CD8-positive, alpha-beta memory T cell (primary cell): ENCODE measurements at regions of chr1 and their contacts with region 1.

Region 1: GRCh38 chr1:23496490-23497181 is 12.7 kb upstream of the ASAP3 start:
- DNase-seq: no peak
- H3K4me3 ChIP-seq: no peak overlapping the region
- H3K4me3 Mint-ChIP-seq: no peak overlapping the region
- H3K27ac ChIP-seq: no peak overlapping the region
- H3K27ac Mint-ChIP-seq: no peak overlapping the region
- H3K4me1 ChIP-seq: no peaks in the 10 kb centered on the region
- H3K4me1 Mint-ChIP-seq: peaks cover 3 to 5% (median 5%) of the 10 kb centered on the region in 3 donors
- H3K27me3 ChIP-seq: no peaks in the 10 kb centered on the region
- H3K27me3 Mint-ChIP-seq: peaks cover 0 to 6% of the 10 kb centered on the region in 2 donors

Region 2: DNA sequence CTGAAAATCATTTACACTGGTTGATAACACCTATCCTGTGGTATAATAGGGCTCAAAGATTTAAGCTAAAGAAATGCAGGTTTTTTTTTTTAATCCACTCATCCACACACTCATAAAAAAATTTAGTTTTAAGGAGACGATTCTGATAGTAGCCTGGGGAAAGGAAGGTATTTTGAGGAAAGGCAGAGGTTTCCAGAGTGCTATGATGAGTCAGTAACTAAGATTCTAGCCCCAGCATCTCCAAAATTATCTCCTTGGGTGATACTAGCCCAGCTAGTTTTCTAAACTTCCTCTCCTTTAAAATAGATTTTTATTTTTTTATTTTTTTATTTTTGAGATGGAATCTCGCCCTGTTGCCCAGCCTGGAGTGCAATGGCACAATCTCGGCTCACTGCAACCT is 33.4 kb before region 1 on chr1:
- CTCF ChIA-PET with region 1: no interaction called
- POLR2A ChIA-PET with region 1: no interaction called
- DNase-seq: no peak
- H3K4me3 ChIP-seq: no peak overlapping the region
- H3K4me3 Mint-ChIP-seq: no peak overlapping the region
- H3K27ac ChIP-seq: no peak overlapping the region
- H3K27ac Mint-ChIP-seq: no peak overlapping the region
- H3K4me1 ChIP-seq: no peaks in the 10 kb centered on the region
- H3K4me1 Mint-ChIP-seq: no peaks in the 10 kb centered on the region
- H3K27me3 ChIP-seq: no peaks in the 10 kb centered on the region
- H3K27me3 Mint-ChIP-seq: peaks cover 5 to 19% of the 10 kb centered on the region in 2 donors

Region 3: GRCh38 chr1:23484253-23485001 is 12.2 kb before region 1 on chr1:
- CTCF ChIA-PET with region 1: interaction called, 40 read pairs
- POLR2A ChIA-PET with region 1: interaction called, 3 read pairs
- DNase-seq: peak; percentile 86 to 94 (median 87)
- H3K4me3 ChIP-seq: peak overlapping the region; percentile 50
- H3K4me3 Mint-ChIP-seq: peak overlapping the region; percentile 87 to 95 (median 88)
- H3K27ac ChIP-seq: no peak overlapping the region
- H3K27ac Mint-ChIP-seq: peak overlapping the region in 6 of 8 donors; percentile 39 to 83 (median 67)
- H3K4me1 ChIP-seq: peaks cover 16% of the 10 kb centered on the region
- H3K4me1 Mint-ChIP-seq: peaks cover 14 to 20% (median 16%) of the 10 kb centered on the region in 3 donors
- H3K27me3 ChIP-seq: peaks cover 10% of the 10 kb centered on the region
- H3K27me3 Mint-ChIP-seq: peaks cover 17 to 27% of the 10 kb centered on the region in 2 donors

Region 4: DNA sequence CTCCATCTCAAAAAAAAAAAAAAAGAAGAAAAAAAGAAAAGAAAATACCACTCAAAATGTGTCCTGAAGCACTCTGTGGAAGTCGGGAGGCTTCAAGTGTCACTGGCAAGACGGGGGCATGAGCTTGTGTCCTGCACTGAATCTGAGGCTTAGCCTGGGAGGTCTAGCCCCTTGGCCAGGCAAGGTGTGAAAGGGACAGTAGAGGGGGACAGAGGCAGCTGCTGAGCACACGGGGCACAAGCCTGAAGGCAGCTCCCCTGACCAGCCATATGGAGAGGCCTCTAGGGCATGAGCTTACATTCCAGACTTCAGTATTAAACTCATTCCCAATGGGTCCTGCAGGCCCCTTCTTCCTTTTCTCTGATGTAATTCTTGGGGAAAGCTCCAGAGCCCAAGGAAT is 10.9 kb after region 1 on chr1:
- CTCF ChIA-PET with region 1: interaction called, 40 read pairs
- POLR2A ChIA-PET with region 1: no interaction called
- DNase-seq: no peak
- H3K4me3 ChIP-seq: no peak overlapping the region
- H3K4me3 Mint-ChIP-seq: no peak overlapping the region
- H3K27ac ChIP-seq: no peak overlapping the region
- H3K27ac Mint-ChIP-seq: peak overlapping the region in 2 of 8 donors; percentile 22 to 38
- H3K4me1 ChIP-seq: no peaks in the 10 kb centered on the region
- H3K4me1 Mint-ChIP-seq: no peaks in the 10 kb centered on the region
- H3K27me3 ChIP-seq: no peaks in the 10 kb centered on the region
- H3K27me3 Mint-ChIP-seq: no peaks in the 10 kb centered on the region

Region 5: DNA sequence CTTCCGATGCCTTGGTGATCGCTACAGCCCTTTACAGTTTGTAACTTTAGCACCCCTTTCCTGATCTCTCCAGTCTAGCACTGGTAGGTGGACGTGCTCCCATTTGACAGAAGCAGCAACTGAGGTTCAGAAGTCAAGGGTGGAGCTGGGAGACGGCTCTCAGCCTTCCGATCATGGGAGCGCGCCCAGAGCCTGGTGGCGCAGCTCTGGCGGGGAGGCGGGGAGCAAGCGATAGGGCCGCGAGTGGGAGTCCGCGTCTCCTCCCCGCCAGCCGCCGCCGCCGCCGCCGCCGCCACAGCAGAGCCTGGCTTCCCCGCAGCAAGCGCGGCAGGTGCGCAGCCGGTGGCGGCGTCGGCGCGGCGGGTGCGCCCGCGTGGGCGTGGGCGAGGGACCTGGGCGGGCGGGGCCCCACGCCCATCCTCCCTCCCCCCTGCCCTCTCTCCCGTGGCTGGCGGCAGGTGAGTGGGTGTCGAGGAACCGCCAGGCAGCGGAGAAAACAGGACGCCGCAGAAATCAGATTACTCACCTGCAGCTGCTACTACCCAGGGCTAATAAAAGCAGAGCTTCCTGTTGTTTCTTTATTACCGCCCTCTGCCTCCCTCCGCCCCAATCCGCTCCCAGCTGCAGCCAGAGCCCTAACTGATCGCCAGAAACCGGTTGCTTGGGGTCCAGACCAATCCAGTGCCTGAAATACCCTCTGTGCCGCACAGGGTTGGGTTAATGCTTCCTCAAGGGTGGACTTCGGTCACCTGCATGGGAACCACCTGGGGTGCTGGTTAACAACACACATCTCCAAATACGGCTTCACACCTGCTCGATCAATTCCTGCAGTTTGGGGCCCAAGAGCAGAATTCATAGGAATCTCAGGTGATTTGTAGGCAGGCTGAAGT is 122.9 kb after region 1 on chr1:
- CTCF ChIA-PET with region 1: interaction called, 13 read pairs
- POLR2A ChIA-PET with region 1: interaction called, 5 read pairs
- DNase-seq: peak; percentile 68 to 92 (median 82)
- H3K4me3 ChIP-seq: peak overlapping the region; percentile 61
- H3K4me3 Mint-ChIP-seq: peak overlapping the region; percentile 79 to 88 (median 83)
- H3K27ac ChIP-seq: peak overlapping the region; percentile 34
- H3K27ac Mint-ChIP-seq: peak overlapping the region; percentile 81 to 97 (median 94)
- H3K4me1 ChIP-seq: peaks cover 83% of the 10 kb centered on the region
- H3K4me1 Mint-ChIP-seq: peaks cover 71 to 88% (median 87%) of the 10 kb centered on the region in 3 donors
- H3K27me3 ChIP-seq: no peaks in the 10 kb centered on the region
- H3K27me3 Mint-ChIP-seq: peaks cover 0 to 2% of the 10 kb centered on the region in 2 donors

Region 6: DNA sequence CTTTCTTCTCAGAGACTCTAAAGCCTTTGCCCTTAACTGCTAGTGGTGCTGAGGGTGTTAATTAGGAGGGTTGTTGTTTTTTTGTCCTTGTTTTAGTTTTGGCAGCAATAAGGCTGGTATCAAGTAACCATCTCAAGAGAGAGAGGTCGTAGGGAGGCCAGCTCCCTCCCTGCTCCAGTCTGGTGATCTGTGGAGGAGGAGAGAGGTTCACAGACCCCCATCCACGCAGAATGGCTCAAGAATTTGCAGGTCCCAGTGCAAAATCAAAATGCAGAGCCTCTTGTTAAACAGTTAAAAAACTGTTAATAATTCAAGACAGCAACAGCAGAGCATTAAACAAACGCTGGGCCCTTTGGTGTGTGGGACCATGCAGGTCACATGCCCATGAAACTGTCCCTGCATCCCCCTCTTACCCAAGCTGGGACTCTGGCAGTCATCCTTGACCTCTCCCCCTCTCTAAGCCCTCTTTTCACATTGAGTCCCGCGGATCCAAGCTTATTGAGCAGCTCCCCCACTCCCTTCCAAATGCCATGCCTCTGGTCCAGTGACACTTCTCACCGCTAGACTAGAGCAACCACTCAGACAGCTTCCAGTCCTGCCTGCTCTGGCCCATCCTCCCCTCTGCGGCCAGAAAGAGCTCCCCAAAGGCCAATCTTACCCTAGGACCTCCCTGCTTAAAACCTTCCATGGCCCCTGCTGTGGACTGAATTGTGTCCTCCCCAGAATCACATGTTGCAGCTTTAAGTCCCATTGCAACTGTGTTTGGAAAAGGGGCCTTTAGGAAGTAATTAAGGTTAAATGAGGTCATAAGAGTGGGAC is 147.3 kb after region 1 on chr1:
- CTCF ChIA-PET with region 1: interaction called, 97 read pairs
- POLR2A ChIA-PET with region 1: no interaction called
- DNase-seq: no peak
- H3K4me3 ChIP-seq: no peak overlapping the region
- H3K4me3 Mint-ChIP-seq: no peak overlapping the region
- H3K27ac ChIP-seq: no peak overlapping the region
- H3K27ac Mint-ChIP-seq: peak overlapping the region in 1 of 8 donors; percentile 29
- H3K4me1 ChIP-seq: no peaks in the 10 kb centered on the region
- H3K4me1 Mint-ChIP-seq: no peaks in the 10 kb centered on the region
- H3K27me3 ChIP-seq: no peaks in the 10 kb centered on the region
- H3K27me3 Mint-ChIP-seq: peaks cover 0 to 1% of the 10 kb centered on the region in 2 donors